Mammary epithelial cell (primary cell): ENCODE measurements at regions of chr11 and their contacts with region 1.

Region 1: DNA sequence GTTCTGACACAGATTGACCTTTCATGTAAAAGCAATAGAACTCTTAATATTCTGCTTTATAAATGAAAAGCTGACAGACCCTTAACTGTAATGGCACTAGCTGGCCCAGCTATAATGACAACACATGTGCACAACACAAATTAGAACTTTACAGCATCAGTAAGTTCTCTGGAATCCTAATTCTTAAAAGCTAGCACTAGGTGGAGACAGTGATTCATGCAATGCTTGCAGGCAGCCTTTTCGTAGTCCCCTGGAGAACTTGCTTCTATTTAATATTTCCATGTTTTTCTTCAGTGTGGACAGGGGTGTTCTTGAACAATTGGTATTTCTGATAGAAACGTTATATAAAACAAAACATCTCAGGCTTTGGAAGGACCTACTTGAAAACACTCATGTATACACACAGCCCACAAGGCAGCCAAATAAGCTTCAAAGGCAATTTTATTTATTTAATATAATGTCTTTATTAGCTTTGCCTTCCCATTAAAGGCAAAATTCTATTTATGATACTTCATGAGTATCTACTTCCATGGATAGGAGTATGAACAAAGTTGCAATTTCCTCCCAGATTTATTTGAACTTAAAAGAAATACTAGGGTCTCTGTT is 374.3 kb upstream of the MPPED2 start:
- DNase-seq: no peak
- H3K4me3 ChIP-seq: no peak overlapping the region
- H3K27ac ChIP-seq: no peak overlapping the region
- H3K4me1 ChIP-seq: no peaks in the 10 kb centered on the region
- H3K27me3 ChIP-seq: no peaks in the 10 kb centered on the region
- CTCF ChIP-seq: peak; percentile 48 to 64

Region 2: DNA sequence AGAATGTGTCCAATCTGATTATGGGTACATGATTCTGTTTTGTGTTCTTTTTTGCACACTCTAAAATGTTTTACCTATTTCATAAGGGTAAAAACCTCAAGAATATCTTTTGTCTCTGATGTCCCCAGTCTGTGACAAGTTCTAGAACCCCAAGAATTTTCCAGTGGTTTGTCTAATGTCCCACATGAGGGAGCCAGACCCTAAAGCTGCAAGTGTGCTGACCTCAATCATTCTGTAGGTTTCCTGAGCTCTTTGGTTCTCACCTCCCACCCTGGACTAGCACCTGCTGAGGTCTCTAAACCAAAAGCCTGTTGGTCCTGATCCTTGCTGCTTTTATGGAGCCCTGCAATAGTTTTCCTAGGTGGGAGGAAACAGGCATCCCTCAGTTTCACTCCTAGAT is 224.5 kb before region 1 on chr11:
- CTCF ChIA-PET with region 1: no interaction called
- dilution Hi-C with region 1: no loop called
- in situ Hi-C with region 1: no loop called
- intact Hi-C with region 1: no loop called
- DNase-seq: no peak
- H3K4me3 ChIP-seq: no peak overlapping the region
- H3K27ac ChIP-seq: no peak overlapping the region
- H3K4me1 ChIP-seq: no peaks in the 10 kb centered on the region
- H3K27me3 ChIP-seq: no peaks in the 10 kb centered on the region
- CTCF ChIP-seq: no peak

Region 3: GRCh38 chr11:30859669-30860068 is 100.8 kb before region 1 on chr11:
- CTCF ChIA-PET with region 1: no interaction called
- dilution Hi-C with region 1: no loop called
- in situ Hi-C with region 1: no loop called
- intact Hi-C with region 1: no loop called
- DNase-seq: no peak
- H3K4me3 ChIP-seq: no peak overlapping the region
- H3K27ac ChIP-seq: no peak overlapping the region
- H3K4me1 ChIP-seq: no peaks in the 10 kb centered on the region
- H3K27me3 ChIP-seq: no peaks in the 10 kb centered on the region
- CTCF ChIP-seq: no peak

Region 4: GRCh38 chr11:31045335-31045734 is 84.8 kb after region 1 on chr11:
- CTCF ChIA-PET with region 1: no interaction called
- dilution Hi-C with region 1: no loop called
- in situ Hi-C with region 1: no loop called
- intact Hi-C with region 1: loop called (anchors 2 kb)
- DNase-seq: no peak
- H3K4me3 ChIP-seq: no peak overlapping the region
- H3K27ac ChIP-seq: no peak overlapping the region
- H3K4me1 ChIP-seq: no peaks in the 10 kb centered on the region
- H3K27me3 ChIP-seq: no peaks in the 10 kb centered on the region
- CTCF ChIP-seq: peak; percentile 18 to 39

Region 5: GRCh38 chr11:31107062-31107461 is 146.6 kb after region 1 on chr11:
- CTCF ChIA-PET with region 1: no interaction called
- dilution Hi-C with region 1: no loop called
- in situ Hi-C with region 1: no loop called
- intact Hi-C with region 1: loop called (anchors 10 kb)
- DNase-seq: peak; percentile 39
- H3K4me3 ChIP-seq: no peak overlapping the region
- H3K27ac ChIP-seq: no peak overlapping the region
- H3K4me1 ChIP-seq: no peaks in the 10 kb centered on the region
- H3K27me3 ChIP-seq: no peaks in the 10 kb centered on the region
- CTCF ChIP-seq: peak; percentile 77 to 85

Region 6: GRCh38 chr11:31233424-31233823 is 272.9 kb after region 1 on chr11:
- CTCF ChIA-PET with region 1: no interaction called
- dilution Hi-C with region 1: no loop called
- in situ Hi-C with region 1: no loop called
- intact Hi-C with region 1: loop called (anchors 1 kb)
- DNase-seq: peak; percentile 6
- H3K4me3 ChIP-seq: no peak overlapping the region
- H3K27ac ChIP-seq: no peak overlapping the region
- H3K4me1 ChIP-seq: no peaks in the 10 kb centered on the region
- H3K27me3 ChIP-seq: no peaks in the 10 kb centered on the region
- CTCF ChIP-seq: peak; percentile 36 to 64